ENCODE measurements at regions of chr17 and their contacts with region 1.

Region 1: GRCh38 chr17:50853015-50853615 is 13.0 kb downstream of the TOB1 start:
- DNase-seq: no peak
- ATAC-seq: no peak
- H3K4me3 ChIP-seq: no peak overlapping the region
- H3K4me3 Mint-ChIP-seq: peak overlapping the region; percentile 65
- H3K27ac ChIP-seq: no peak overlapping the region
- H3K27ac Mint-ChIP-seq: peak overlapping the region; percentile 86
- H3K4me1 ChIP-seq: peaks cover 9 to 11% of the 10 kb centered on the region in 2 donors
- H3K4me1 Mint-ChIP-seq: peaks cover 13% of the 10 kb centered on the region
- H3K27me3 ChIP-seq: no peaks in the 10 kb centered on the region
- H3K27me3 Mint-ChIP-seq: no peaks in the 10 kb centered on the region
- CTCF ChIP-seq: no peak

Region 2: GRCh38 chr17:50816771-50817751 is 36.1 kb before region 1 on chr17:
- CTCF ChIA-PET with region 1: interaction called, 12 read pairs
- POLR2A ChIA-PET with region 1: no interaction called
- intact Hi-C with region 1: no loop called
- DNase-seq: peak; percentile 66
- ATAC-seq: peak; percentile 51
- H3K4me3 ChIP-seq: no peak overlapping the region
- H3K4me3 Mint-ChIP-seq: no peak overlapping the region
- H3K27ac ChIP-seq: no peak overlapping the region
- H3K27ac Mint-ChIP-seq: no peak overlapping the region
- H3K4me1 ChIP-seq: peaks cover 0 to 7% of the 10 kb centered on the region in 2 donors
- H3K4me1 Mint-ChIP-seq: peaks cover 5% of the 10 kb centered on the region
- H3K27me3 ChIP-seq: peaks cover 0 to 7% (median 2%) of the 10 kb centered on the region in 4 experiments
- H3K27me3 Mint-ChIP-seq: peaks cover 34% of the 10 kb centered on the region
- CTCF ChIP-seq: peak; percentile 85

Region 3: DNA sequence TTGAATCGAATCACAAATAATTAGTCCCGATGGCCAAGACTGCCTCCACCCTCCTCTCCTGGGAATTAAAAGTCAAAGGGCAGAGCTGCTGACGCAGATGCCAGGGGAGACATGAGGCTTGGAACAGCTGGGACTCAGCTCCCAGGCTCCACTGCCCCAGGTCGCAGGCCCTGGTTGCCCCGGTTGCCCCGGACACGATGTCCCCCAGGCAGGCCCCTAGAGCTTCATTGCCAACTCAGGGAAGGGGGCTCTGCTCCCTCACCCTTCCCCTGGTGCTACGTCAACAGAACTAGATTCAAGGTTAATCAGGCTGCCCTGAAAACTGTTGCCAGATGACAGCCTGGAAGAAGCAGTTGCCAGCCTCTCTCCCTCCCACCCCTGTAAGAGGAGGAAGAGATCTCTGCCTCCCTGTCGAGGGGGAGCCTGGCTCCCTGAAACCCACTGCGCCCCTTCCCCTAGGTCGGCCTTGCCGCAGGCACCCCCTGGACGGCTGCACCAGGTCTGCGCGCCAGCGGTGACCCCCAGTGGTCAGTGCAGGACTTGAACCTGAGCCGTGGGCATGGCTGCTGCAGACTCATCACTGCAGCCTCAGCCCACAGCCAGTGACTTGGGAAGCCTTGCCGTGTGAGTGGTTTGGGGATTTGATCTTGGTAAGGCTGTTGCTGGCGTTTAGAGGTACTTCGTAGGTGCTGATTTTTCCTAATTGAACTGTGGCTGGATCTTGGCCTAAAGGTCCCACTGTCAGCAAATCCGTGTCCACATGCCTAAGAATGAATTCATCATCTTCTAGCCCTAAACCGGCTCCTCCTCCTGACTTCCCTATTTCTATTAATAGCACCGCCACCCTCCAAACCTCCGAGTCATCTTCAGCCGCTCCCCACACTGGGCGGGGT is 97.1 kb after region 1 on chr17:
- CTCF ChIA-PET with region 1: interaction called, 400 read pairs
- POLR2A ChIA-PET with region 1: interaction called, 3 read pairs
- intact Hi-C with region 1: loop called (anchors 1 kb)
- DNase-seq: peak; percentile 62
- ATAC-seq: peak; percentile 72
- H3K4me3 ChIP-seq: peak overlapping the region in 1 of 5 experiments; percentile 36
- H3K4me3 Mint-ChIP-seq: peak overlapping the region; percentile 70
- H3K27ac ChIP-seq: no peak overlapping the region
- H3K27ac Mint-ChIP-seq: peak overlapping the region; percentile 27
- H3K4me1 ChIP-seq: peaks cover 10 to 13% of the 10 kb centered on the region in 2 donors
- H3K4me1 Mint-ChIP-seq: peaks cover 10% of the 10 kb centered on the region
- H3K27me3 ChIP-seq: peaks cover 0 to 7% (median 0%) of the 10 kb centered on the region in 4 experiments
- H3K27me3 Mint-ChIP-seq: peaks cover 9% of the 10 kb centered on the region
- CTCF ChIP-seq: no peak

Region 4: GRCh38 chr17:50956750-50957523 is 103.8 kb after region 1 on chr17:
- CTCF ChIA-PET with region 1: interaction called, 400 read pairs
- POLR2A ChIA-PET with region 1: interaction called, 3 read pairs
- intact Hi-C with region 1: loop called (anchors 1 kb)
- DNase-seq: peak; percentile 78
- ATAC-seq: peak; percentile 89
- H3K4me3 ChIP-seq: no peak overlapping the region
- H3K4me3 Mint-ChIP-seq: no peak overlapping the region
- H3K27ac ChIP-seq: no peak overlapping the region
- H3K27ac Mint-ChIP-seq: no peak overlapping the region
- H3K4me1 ChIP-seq: peaks cover 0 to 5% of the 10 kb centered on the region in 2 donors
- H3K4me1 Mint-ChIP-seq: peaks cover 2% of the 10 kb centered on the region
- H3K27me3 ChIP-seq: peaks cover 0 to 4% (median 0%) of the 10 kb centered on the region in 4 experiments
- H3K27me3 Mint-ChIP-seq: no peaks in the 10 kb centered on the region
- CTCF ChIP-seq: peak; percentile 79

Region 5: GRCh38 chr17:50963139-50963538 is 110.0 kb after region 1 on chr17:
- CTCF ChIA-PET with region 1: interaction called, 400 read pairs
- POLR2A ChIA-PET with region 1: interaction called, 3 read pairs
- intact Hi-C with region 1: no loop called
- DNase-seq: no peak
- ATAC-seq: no peak
- H3K4me3 ChIP-seq: no peak overlapping the region
- H3K4me3 Mint-ChIP-seq: no peak overlapping the region
- H3K27ac ChIP-seq: no peak overlapping the region
- H3K27ac Mint-ChIP-seq: no peak overlapping the region
- H3K4me1 ChIP-seq: no peaks in the 10 kb centered on the region
- H3K4me1 Mint-ChIP-seq: no peaks in the 10 kb centered on the region
- H3K27me3 ChIP-seq: no peaks in the 10 kb centered on the region
- H3K27me3 Mint-ChIP-seq: no peaks in the 10 kb centered on the region
- CTCF ChIP-seq: no peak

Region 6: DNA sequence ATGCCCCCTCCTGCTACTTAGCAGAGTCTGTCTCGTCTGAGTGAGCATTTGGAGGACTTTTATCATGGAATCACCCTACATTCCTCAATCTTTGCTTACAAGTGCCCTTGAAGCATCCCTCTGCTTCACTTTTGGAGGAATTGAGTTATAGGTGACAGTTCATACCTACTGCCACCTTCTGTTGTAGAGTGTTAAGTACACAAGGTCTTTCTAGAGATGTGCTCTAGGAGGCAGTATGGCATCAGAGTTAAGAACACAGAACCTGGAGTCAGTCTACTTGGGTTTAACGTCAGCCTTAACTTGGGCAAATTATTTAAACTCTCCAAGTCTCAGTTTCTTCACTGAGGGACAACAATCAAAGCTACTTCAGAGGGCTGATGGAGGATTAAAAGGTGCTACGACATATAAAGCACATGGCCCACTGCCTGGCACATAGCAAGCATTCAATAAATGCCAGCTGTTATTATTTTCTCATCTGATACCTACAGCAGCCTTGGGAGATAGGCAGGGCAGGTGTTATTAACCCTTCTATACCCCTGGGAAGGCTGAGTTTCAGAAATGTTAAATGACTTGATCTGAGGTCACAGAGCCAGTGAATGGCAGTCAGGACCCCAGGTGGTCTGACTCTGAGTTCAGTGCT is 469.4 kb after region 1 on chr17:
- CTCF ChIA-PET with region 1: no interaction called
- POLR2A ChIA-PET with region 1: no interaction called
- intact Hi-C with region 1: no loop called
- DNase-seq: no peak
- ATAC-seq: no peak
- H3K4me3 ChIP-seq: no peak overlapping the region
- H3K4me3 Mint-ChIP-seq: no peak overlapping the region
- H3K27ac ChIP-seq: no peak overlapping the region
- H3K27ac Mint-ChIP-seq: no peak overlapping the region
- H3K4me1 ChIP-seq: no peaks in the 10 kb centered on the region
- H3K4me1 Mint-ChIP-seq: peaks cover 11% of the 10 kb centered on the region
- H3K27me3 ChIP-seq: peaks cover 0 to 3% (median 0%) of the 10 kb centered on the region in 4 experiments
- H3K27me3 Mint-ChIP-seq: peaks cover 17% of the 10 kb centered on the region
- CTCF ChIP-seq: peak; percentile 10

Measured in B cell (primary cell).